Endothelial cell of umbilical vein (primary cell): ENCODE measurements at regions of chr15 and their contacts with region 1.

Region 1: GRCh38 chr15:70806992-70807712 is 43.8 kb upstream of the UACA start:
- DNase-seq: peak; percentile 82
- H3K4me3 ChIP-seq: no peak overlapping the region
- H3K27ac ChIP-seq: peak overlapping the region; percentile 76
- H3K4me1 ChIP-seq: peaks cover 30% of the 10 kb centered on the region
- H3K27me3 ChIP-seq: no peaks in the 10 kb centered on the region
- CTCF ChIP-seq: no peak
- POLR2A ChIP-seq: no peak

Region 2: DNA sequence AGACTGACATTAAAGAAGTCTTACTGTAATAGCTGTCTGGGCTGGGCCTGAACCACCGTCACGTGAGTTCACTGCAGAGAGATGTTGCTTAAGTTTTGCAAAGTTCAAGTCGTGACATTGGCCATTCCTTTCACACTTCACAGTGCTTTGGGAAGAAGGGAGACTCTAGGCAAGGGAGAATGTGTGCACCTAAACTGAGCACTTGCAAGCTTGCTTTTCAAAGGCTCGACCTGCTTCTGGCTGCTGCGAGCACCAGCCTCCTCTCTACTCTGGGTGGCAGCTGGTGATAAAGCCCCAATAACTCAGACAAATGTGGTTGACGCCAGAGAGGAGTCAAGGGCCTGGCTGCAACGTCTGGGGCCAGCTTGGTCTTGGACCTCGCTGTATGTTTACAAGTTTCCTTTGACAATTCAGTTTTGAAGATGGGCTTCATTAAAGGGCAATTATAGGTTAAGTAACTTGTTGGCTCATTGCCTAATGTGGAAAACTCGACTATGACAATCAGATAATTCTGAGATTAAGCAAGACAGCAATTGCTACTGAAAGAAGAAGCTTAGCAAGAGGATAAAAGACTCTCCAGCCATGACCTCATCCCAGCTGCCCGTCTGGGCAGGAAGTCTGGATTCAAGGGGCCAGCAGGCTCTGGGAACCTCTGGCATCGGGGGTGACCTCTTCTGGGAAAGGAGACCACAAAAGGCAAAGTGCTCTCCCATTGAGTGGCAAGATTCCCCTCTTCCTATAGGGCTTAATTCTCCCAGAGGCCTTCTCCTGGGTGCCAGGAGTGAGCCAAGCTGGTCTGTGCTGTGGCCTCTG is 467.3 kb before region 1 on chr15:
- CTCF ChIA-PET with region 1: no interaction called
- POLR2A ChIA-PET with region 1: no interaction called
- dilution Hi-C with region 1: no loop called
- intact Hi-C with region 1: no loop called
- DNase-seq: peak; percentile 27
- H3K4me3 ChIP-seq: no peak overlapping the region
- H3K27ac ChIP-seq: no peak overlapping the region
- H3K4me1 ChIP-seq: no peaks in the 10 kb centered on the region
- H3K27me3 ChIP-seq: no peaks in the 10 kb centered on the region
- CTCF ChIP-seq: no peak
- POLR2A ChIP-seq: no peak

Region 3: GRCh38 chr15:70528270-70528706 is 278.9 kb before region 1 on chr15:
- CTCF ChIA-PET with region 1: no interaction called
- POLR2A ChIA-PET with region 1: no interaction called
- dilution Hi-C with region 1: no loop called
- intact Hi-C with region 1: no loop called
- DNase-seq: peak; percentile 70
- H3K4me3 ChIP-seq: no peak overlapping the region
- H3K27ac ChIP-seq: no peak overlapping the region
- H3K4me1 ChIP-seq: peaks cover 5% of the 10 kb centered on the region
- H3K27me3 ChIP-seq: peaks cover 0 to 6% of the 10 kb centered on the region in 2 experiments
- CTCF ChIP-seq: no peak
- POLR2A ChIP-seq: no peak

Region 4: DNA sequence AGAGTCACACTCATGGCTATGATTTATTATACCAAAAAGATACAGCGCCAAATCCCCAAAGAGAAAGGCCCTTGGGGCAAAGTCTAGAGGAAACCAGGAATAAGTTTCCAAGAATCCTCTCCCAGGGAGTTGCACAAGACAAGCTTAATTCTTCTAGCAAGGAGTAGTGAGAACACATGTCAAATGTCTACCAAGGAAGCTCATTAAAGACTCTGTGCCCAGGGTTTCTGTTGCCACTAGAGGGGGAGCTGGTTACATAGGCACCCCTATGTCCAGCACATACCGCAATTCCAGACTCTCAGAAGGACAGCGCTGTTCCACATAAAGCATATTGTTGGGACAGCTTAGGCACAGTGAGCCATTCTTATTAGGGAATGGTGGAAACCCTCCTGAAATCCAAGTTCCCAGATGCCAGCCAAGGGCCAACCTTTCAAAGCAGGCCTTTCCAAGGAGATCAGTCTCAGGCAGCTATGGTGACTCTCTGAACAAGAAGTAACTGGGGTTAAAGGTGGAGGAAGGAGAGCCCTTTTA is 238.0 kb before region 1 on chr15:
- CTCF ChIA-PET with region 1: interaction called, 34 read pairs
- POLR2A ChIA-PET with region 1: no interaction called
- dilution Hi-C with region 1: no loop called
- intact Hi-C with region 1: loop called (anchors 1 kb)
- DNase-seq: peak; percentile 71
- H3K4me3 ChIP-seq: no peak overlapping the region
- H3K27ac ChIP-seq: no peak overlapping the region
- H3K4me1 ChIP-seq: no peaks in the 10 kb centered on the region
- H3K27me3 ChIP-seq: peaks cover 2 to 5% of the 10 kb centered on the region in 2 experiments
- CTCF ChIP-seq: peak; percentile 55 to 77
- POLR2A ChIP-seq: no peak

Region 5: GRCh38 chr15:70701891-70702568 is 105.1 kb before region 1 on chr15:
- CTCF ChIA-PET with region 1: interaction called, 8 read pairs
- POLR2A ChIA-PET with region 1: no interaction called
- dilution Hi-C with region 1: no loop called
- intact Hi-C with region 1: loop called (anchors 5 kb)
- DNase-seq: peak; percentile 86
- H3K4me3 ChIP-seq: peak overlapping the region in 2 of 3 experiments; percentile 35 to 96
- H3K27ac ChIP-seq: peak overlapping the region; percentile 94
- H3K4me1 ChIP-seq: peaks cover 55% of the 10 kb centered on the region
- H3K27me3 ChIP-seq: no peaks in the 10 kb centered on the region
- CTCF ChIP-seq: no peak
- POLR2A ChIP-seq: peak; percentile 20

Region 6: GRCh38 chr15:70741107-70741531 is 66.0 kb before region 1 on chr15:
- CTCF ChIA-PET with region 1: interaction called, 23 read pairs
- POLR2A ChIA-PET with region 1: no interaction called
- dilution Hi-C with region 1: no loop called
- intact Hi-C with region 1: no loop called
- DNase-seq: peak; percentile 78
- H3K4me3 ChIP-seq: no peak overlapping the region
- H3K27ac ChIP-seq: peak overlapping the region; percentile 66
- H3K4me1 ChIP-seq: peaks cover 27% of the 10 kb centered on the region
- H3K27me3 ChIP-seq: no peaks in the 10 kb centered on the region
- CTCF ChIP-seq: no peak
- POLR2A ChIP-seq: no peak

Region 7: GRCh38 chr15:70763120-70763878 is 43.9 kb before region 1 on chr15 and contains the start of gene UACA:
- CTCF ChIA-PET with region 1: interaction called, 39 read pairs
- POLR2A ChIA-PET with region 1: no interaction called
- dilution Hi-C with region 1: no loop called
- intact Hi-C with region 1: loop called (anchors 1 kb)
- DNase-seq: peak; percentile 99
- H3K4me3 ChIP-seq: peak within 1 kb of the TSS; percentile 71 to 90 (median 89)
- H3K27ac ChIP-seq: peak within 1 kb of the TSS; percentile 83
- H3K4me1 ChIP-seq: peaks cover 32% of the 10 kb centered on the region
- H3K27me3 ChIP-seq: no peaks in the 10 kb centered on the region
- CTCF ChIP-seq: no peak
- POLR2A ChIP-seq: peak; percentile 91
- total RNA-seq, gene UACA: 270 and 292 TPM in 2 replicates

Region 8: DNA sequence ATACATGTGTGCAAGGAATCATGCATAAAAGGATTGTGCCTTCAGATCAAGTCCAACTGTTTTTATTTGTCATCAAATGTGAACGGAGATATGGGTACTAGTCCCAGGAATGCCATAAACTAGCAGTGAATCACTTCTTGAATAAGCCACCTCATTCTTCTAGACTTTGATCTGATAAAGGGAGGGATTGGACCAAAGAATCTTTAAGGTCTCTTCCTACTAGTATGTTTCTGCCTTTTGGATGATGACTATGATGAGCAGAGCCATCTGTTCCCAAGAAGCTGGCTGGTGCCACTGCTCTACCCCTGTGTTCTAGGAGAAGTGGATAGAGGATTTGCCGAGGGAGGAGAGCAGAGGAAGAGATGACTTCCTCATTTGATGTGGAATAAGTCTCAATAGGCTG is 15.0 kb before region 1 on chr15:
- CTCF ChIA-PET with region 1: interaction called, 18 read pairs
- POLR2A ChIA-PET with region 1: no interaction called
- dilution Hi-C with region 1: no loop called
- intact Hi-C with region 1: no loop called
- DNase-seq: peak; percentile 49
- H3K4me3 ChIP-seq: no peak overlapping the region
- H3K27ac ChIP-seq: peak overlapping the region; percentile 50
- H3K4me1 ChIP-seq: peaks cover 38% of the 10 kb centered on the region
- H3K27me3 ChIP-seq: no peaks in the 10 kb centered on the region
- CTCF ChIP-seq: no peak
- POLR2A ChIP-seq: no peak

Region 9: DNA sequence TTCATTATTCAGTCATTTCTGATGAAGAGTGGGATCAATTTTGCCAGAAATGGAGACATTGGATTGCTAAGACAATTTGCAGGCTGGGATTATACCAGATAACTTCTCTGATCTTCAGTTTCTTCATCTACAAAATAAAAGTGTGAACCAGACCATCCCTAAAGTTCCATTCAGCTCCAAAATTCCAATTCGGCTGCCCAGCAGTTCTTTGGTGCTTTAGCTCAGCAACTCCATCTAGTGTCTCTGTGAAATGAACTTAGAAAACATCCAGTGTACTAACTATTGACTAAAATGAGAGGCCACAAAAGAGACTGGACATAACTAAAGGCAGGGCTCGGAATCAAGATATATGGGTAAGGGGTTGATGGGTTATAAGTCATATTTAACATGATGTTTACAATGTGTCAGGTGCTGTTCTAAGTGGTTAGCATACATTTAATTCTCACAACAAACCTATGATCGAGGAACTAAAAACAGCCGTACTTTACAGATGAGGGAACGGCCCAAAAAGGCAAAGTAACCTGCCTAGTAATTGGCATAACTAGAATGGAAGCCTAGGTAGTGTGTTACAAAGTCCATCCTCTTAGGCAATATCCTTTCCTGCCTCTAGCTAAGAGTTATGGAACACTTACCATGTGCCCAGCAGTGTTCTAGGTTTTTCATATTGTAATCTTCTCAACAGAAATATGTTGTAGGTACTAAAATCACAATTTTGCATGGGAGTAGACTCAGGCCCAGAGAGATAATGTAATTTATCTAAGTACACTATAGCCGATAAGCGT is 68.0 kb after region 1 on chr15:
- CTCF ChIA-PET with region 1: interaction called, 17 read pairs
- POLR2A ChIA-PET with region 1: no interaction called
- dilution Hi-C with region 1: no loop called
- intact Hi-C with region 1: no loop called
- DNase-seq: peak; percentile 48
- H3K4me3 ChIP-seq: no peak overlapping the region
- H3K27ac ChIP-seq: no peak overlapping the region
- H3K4me1 ChIP-seq: peaks cover 8% of the 10 kb centered on the region
- H3K27me3 ChIP-seq: no peaks in the 10 kb centered on the region
- CTCF ChIP-seq: peak; percentile 23 to 45
- POLR2A ChIP-seq: no peak

Region 10: DNA sequence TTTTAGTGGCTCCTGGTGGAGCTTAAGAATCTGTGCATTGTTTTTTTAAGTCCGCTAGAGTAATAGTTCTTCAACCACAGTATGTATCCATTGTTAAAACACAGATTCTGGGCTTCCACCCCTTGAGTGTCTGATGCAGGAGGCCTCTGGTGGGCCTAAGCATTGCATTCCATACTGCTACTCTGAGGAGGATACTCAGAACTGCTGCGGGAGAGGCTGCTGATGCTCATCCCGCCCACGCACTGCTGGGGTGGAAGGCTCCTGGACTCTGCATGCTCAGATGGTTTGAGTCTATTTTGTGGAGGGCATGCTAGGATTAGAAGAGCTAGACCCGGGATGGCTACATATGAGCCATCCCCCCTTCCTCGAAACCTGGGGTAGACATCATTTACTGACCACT is 382.6 kb after region 1 on chr15:
- CTCF ChIA-PET with region 1: no interaction called
- POLR2A ChIA-PET with region 1: no interaction called
- dilution Hi-C with region 1: no loop called
- intact Hi-C with region 1: no loop called
- DNase-seq: no peak
- H3K4me3 ChIP-seq: no peak overlapping the region
- H3K27ac ChIP-seq: no peak overlapping the region
- H3K4me1 ChIP-seq: no peaks in the 10 kb centered on the region
- H3K27me3 ChIP-seq: no peaks in the 10 kb centered on the region
- CTCF ChIP-seq: no peak
- POLR2A ChIP-seq: no peak